A549 (cell line): ENCODE measurements at regions of chr14 and their contacts with region 1.

Region 1: GRCh38 chr14:105527661-105528581 is 1.5 kb downstream of the TMEM121 start:
- DNase-seq: peak; percentile 76 to 81
- ATAC-seq: peak; percentile 45 to 80
- H3K4me3 ChIP-seq: peak overlapping the region; percentile 52
- H3K27ac ChIP-seq: peak overlapping the region; percentile 92 to 96
- H3K4me1 ChIP-seq: peaks cover 21% of the 10 kb centered on the region
- CTCF ChIP-seq: peak; percentile 89
- EP300 ChIP-seq: no peak
- POLR2A ChIP-seq: peak; percentile 20; the same call in 1 of the 2 replicates
- RAD21 ChIP-seq: peak; percentile 80 to 92

Region 2: DNA sequence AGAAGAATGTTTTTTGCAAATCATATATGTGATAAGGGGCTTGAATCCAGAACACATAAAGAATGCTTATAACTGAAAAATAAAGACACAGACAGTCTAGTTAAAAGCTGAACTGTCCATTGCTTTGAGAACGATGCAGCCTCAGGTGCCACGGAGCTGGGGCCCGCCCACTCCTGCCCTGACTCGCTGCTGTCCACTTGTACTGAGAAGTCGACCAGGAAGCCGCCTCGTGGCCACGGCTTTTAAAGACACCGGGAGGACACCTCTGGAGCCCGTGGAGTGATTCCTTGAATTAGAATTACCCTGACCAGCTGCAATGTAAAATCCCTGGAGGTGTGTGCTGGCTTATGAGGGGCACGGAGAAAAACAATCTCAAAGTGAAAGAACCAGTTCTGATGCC is 153.5 kb before region 1 on chr14:
- CTCF ChIA-PET with region 1: interaction called, 10 read pairs
- POLR2A ChIA-PET with region 1: no interaction called
- DNase-seq: no peak
- ATAC-seq: 0 out of 6 replicates have a peak, but pooled peaks of 1 of the 2 experiments have one; percentile 12
- H3K4me3 ChIP-seq: no peak overlapping the region
- H3K27ac ChIP-seq: no peak overlapping the region
- H3K4me1 ChIP-seq: no peaks in the 10 kb centered on the region
- CTCF ChIP-seq: no peak
- EP300 ChIP-seq: no peak
- POLR2A ChIP-seq: no peak
- RAD21 ChIP-seq: no peak

Region 3: DNA sequence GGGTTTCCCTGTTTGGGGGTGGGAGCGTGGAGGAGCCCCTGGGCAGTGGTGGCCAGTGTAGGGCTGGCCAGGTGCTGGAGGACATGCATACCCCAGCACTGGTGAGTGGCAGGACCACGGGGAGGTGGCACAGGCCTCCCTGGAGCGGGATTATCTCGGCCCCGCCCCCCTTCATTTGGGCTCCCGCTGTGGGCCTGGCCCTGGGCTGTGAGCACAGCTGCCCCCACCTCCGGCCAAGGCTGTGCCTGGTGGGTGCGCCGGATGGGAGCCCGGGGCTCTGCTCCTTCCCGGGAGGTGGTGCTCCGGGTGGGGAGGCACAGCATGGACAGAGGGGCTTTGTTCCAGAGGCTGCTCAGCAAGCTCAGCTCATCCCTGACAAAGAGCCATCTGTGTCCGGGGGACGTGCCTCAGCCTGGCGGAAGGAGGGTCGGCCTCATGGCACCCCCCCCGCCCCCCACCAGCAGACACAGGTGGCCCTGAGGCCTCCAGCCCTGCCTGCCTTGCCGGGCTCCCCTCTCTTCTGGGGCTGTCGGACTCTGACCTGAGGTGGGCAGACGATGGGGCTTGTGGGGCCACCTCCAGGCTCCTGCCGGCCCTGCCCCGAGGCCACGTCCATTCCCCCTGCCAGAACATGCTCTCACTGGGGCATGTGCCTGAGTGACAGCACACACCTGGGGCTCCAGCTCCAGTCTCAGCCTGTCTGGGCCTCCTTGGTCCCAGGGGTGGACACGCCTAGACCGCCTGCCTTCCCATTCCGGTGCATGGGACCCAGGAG is 28.5 kb before region 1 on chr14:
- CTCF ChIA-PET with region 1: interaction called, 15 read pairs
- POLR2A ChIA-PET with region 1: no interaction called
- DNase-seq: no peak
- ATAC-seq: peak in 1 of 2 experiments; percentile 1; a peak in 3 of 6 replicates
- H3K4me3 ChIP-seq: no peak overlapping the region
- H3K27ac ChIP-seq: no peak overlapping the region
- H3K4me1 ChIP-seq: no peaks in the 10 kb centered on the region
- CTCF ChIP-seq: no peak
- EP300 ChIP-seq: no peak
- POLR2A ChIP-seq: no peak
- RAD21 ChIP-seq: no peak

Region 4: GRCh38 chr14:105505091-105505490 is 22.8 kb before region 1 on chr14:
- CTCF ChIA-PET with region 1: interaction called, 27 read pairs
- POLR2A ChIA-PET with region 1: no interaction called
- DNase-seq: no peak
- ATAC-seq: no peak; a peak in 1 of 6 replicates
- H3K4me3 ChIP-seq: no peak overlapping the region
- H3K27ac ChIP-seq: no peak overlapping the region
- H3K4me1 ChIP-seq: no peaks in the 10 kb centered on the region
- CTCF ChIP-seq: no peak
- EP300 ChIP-seq: no peak
- POLR2A ChIP-seq: no peak
- RAD21 ChIP-seq: no peak